ENCODE measurements at regions of chr6 and their contacts with region 1.

Region 1: DNA sequence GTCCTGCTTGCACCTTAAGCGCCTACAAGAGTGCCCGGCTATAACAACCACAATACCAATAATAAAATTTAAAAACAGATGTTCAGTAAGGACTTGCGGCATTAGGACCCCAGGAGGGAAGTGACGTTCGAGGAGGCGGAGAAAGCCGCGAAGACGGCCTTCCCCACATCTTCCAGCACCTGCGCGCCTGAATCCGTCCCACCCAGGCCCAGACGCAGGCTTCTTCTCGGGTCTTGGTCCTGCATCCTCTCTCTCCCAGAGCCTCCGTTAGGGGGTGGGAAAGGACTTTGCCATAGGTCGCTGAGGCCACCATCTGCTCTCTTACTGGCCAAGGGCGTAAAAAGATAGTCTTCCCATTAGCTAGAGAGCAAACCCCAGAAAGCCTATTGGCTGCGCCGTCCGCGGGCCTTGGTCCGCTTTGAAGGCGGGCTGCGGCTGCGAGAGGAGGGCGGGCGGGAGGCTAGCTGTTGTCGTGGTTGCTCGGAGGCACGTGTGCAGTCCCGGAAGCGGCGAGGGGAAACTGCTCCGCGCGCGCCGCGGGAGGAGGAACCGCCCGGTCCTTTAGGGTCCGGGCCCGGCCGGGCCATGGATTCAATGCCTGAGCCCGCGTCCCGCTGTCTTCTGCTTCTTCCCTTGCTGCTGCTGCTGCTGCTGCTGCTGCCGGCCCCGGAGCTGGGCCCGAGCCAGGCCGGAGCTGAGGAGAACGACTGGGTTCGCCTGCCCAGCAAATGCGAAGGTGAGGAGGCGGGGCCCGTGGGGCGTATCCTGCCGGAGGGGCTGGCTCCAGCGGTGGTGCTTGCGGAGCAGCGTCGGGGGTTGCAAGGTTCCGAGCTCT is at the start of gene CNPY3:
- DNase-seq: peak; percentile 80 to 96 (median 95)
- ATAC-seq: peak; percentile 90
- H3K4me3 ChIP-seq: peak within 1 kb of the TSS; percentile 80
- H3K4me3 Mint-ChIP-seq: peak within 1 kb of the TSS; percentile 86 to 99 (median 98)
- H3K27ac ChIP-seq: peak within 1 kb of the TSS; percentile 95
- H3K27ac Mint-ChIP-seq: peak within 1 kb of the TSS; percentile 96 to 100 (median 99)
- H3K4me1 ChIP-seq: peaks cover 33% of the 10 kb centered on the region in 2 donors
- H3K4me1 Mint-ChIP-seq: peaks cover 34 to 53% (median 43%) of the 10 kb centered on the region in 7 donors
- H3K27me3 ChIP-seq: no peaks in the 10 kb centered on the region
- H3K27me3 Mint-ChIP-seq: no peaks in the 10 kb centered on the region
- total RNA-seq, gene CNPY3: 58.6 to 98.9 (median 87.4) TPM

Region 2: GRCh38 chr6:42745707-42746462 is 183.3 kb before region 1 on chr6 and contains the start of gene TBCC:
- CTCF ChIA-PET with region 1: no interaction called
- POLR2A ChIA-PET with region 1: interaction called, 9 read pairs
- intact Hi-C with region 1: loop called (anchors 1 kb)
- DNase-seq: peak; percentile 73 to 97 (median 93)
- ATAC-seq: peak; percentile 88
- H3K4me3 ChIP-seq: peak within 1 kb of the TSS; percentile 95
- H3K4me3 Mint-ChIP-seq: peak within 1 kb of the TSS; percentile 91 to 100 (median 99)
- H3K27ac ChIP-seq: peak within 1 kb of the TSS; percentile 88
- H3K27ac Mint-ChIP-seq: peak within 1 kb of the TSS; percentile 97 to 100 (median 100)
- H3K4me1 ChIP-seq: peaks cover 19 to 29% of the 10 kb centered on the region in 2 donors
- H3K4me1 Mint-ChIP-seq: peaks cover 12 to 39% (median 27%) of the 10 kb centered on the region in 7 donors
- H3K27me3 ChIP-seq: no peaks in the 10 kb centered on the region
- H3K27me3 Mint-ChIP-seq: no peaks in the 10 kb centered on the region
- total RNA-seq, gene TBCC: 39.6 to 74.8 (median 71.4) TPM

Region 3: GRCh38 chr6:42911171-42912021 is 17.8 kb before region 1 on chr6:
- CTCF ChIA-PET with region 1: no interaction called
- POLR2A ChIA-PET with region 1: interaction called, 3 read pairs
- intact Hi-C with region 1: loop called in 1 of 2 experiments (anchors 1 kb)
- DNase-seq: no peak
- ATAC-seq: no peak
- H3K4me3 ChIP-seq: no peak overlapping the region
- H3K4me3 Mint-ChIP-seq: peak overlapping the region; percentile 17 to 82 (median 67)
- H3K27ac ChIP-seq: no peak overlapping the region
- H3K27ac Mint-ChIP-seq: peak overlapping the region in 2 of 9 donors; percentile 41 to 66
- H3K4me1 ChIP-seq: no peaks in the 10 kb centered on the region
- H3K4me1 Mint-ChIP-seq: peaks cover 0 to 6% (median 4%) of the 10 kb centered on the region in 7 donors
- H3K27me3 ChIP-seq: no peaks in the 10 kb centered on the region
- H3K27me3 Mint-ChIP-seq: peaks cover 5 to 22% (median 9%) of the 10 kb centered on the region in 5 donors

Region 4: GRCh38 chr6:42984001-42984923 is 55.1 kb after region 1 on chr6 and contains the start of gene PPP2R5D:
- CTCF ChIA-PET with region 1: interaction called, 4 read pairs
- POLR2A ChIA-PET with region 1: interaction called, 94 read pairs
- intact Hi-C with region 1: loop called (anchors 1 kb)
- DNase-seq: peak; percentile 81 to 98 (median 97)
- ATAC-seq: peak; percentile 97
- H3K4me3 ChIP-seq: peak within 1 kb of the TSS; percentile 64
- H3K4me3 Mint-ChIP-seq: peak within 1 kb of the TSS; percentile 87 to 99 (median 94)
- H3K27ac ChIP-seq: peak within 1 kb of the TSS; percentile 95
- H3K27ac Mint-ChIP-seq: peak within 1 kb of the TSS; percentile 89 to 99 (median 95)
- H3K4me1 ChIP-seq: peaks cover 28 to 40% of the 10 kb centered on the region in 2 donors
- H3K4me1 Mint-ChIP-seq: peaks cover 46 to 71% (median 68%) of the 10 kb centered on the region in 7 donors
- H3K27me3 ChIP-seq: no peaks in the 10 kb centered on the region
- H3K27me3 Mint-ChIP-seq: no peaks in the 10 kb centered on the region
- total RNA-seq, gene PPP2R5D: 19.7 to 60.4 (median 28.2) TPM

Region 5: GRCh38 chr6:43113431-43114260 is 184.4 kb after region 1 on chr6:
- CTCF ChIA-PET with region 1: no interaction called
- POLR2A ChIA-PET with region 1: no interaction called
- intact Hi-C with region 1: no loop called
- DNase-seq: no peak
- ATAC-seq: no peak
- H3K4me3 ChIP-seq: no peak overlapping the region
- H3K4me3 Mint-ChIP-seq: no peak overlapping the region
- H3K27ac ChIP-seq: no peak overlapping the region
- H3K27ac Mint-ChIP-seq: no peak overlapping the region
- H3K4me1 ChIP-seq: no peaks in the 10 kb centered on the region
- H3K4me1 Mint-ChIP-seq: peaks cover 0 to 2% (median 0%) of the 10 kb centered on the region in 7 donors
- H3K27me3 ChIP-seq: no peaks in the 10 kb centered on the region
- H3K27me3 Mint-ChIP-seq: no peaks in the 10 kb centered on the region

Region 6: DNA sequence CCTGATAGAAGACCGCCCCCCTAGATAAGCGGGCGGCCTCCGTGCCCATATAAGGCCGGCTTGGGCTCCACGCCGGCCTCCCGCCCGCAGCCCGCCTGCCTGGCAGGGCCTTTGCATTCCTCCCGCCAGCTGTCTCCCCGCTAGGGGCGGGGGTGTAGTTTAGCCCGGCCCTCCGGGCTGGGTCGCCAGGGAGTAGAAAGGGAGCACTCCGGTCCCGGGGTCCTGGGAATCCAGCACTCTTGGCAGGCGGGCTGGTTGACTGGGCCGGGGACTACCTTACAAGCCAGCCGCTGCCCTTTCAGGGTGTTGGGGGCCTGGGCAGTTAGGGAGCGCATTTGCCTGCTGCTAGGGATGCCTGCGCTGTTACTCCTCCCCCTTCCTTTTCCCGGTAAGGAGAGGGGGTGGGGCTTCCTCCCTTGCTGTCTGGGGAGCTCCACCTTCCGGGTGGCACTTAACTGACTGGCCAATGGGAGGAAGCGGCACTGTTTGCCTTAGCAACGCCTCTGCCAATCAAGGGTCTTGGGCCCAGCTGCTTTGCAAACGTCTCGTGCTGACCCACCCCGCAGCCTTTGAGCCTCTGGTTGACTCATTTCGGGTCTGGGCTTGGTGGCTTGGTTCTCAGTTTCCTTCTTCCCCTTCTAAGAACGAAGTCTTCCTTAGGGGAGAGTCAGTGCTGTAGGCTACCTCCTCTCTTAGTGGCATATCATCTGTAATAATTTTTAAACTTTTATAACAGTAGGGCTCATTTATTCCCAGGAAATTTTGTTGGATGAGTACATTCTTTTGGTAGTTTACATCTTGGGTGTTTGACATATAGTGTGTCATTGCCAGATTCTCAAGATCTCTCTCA is 245.3 kb after region 1 on chr6:
- CTCF ChIA-PET with region 1: no interaction called
- POLR2A ChIA-PET with region 1: interaction called, 8 read pairs
- intact Hi-C with region 1: loop called (anchors 1 kb)
- DNase-seq: peak; percentile 66 to 92 (median 88)
- ATAC-seq: peak; percentile 77
- H3K4me3 ChIP-seq: peak overlapping the region; percentile 72
- H3K4me3 Mint-ChIP-seq: peak overlapping the region; percentile 85 to 99 (median 96)
- H3K27ac ChIP-seq: peak overlapping the region; percentile 73
- H3K27ac Mint-ChIP-seq: peak overlapping the region; percentile 90 to 98 (median 94)
- H3K4me1 ChIP-seq: peaks cover 26 to 29% of the 10 kb centered on the region in 2 donors
- H3K4me1 Mint-ChIP-seq: peaks cover 35 to 49% (median 40%) of the 10 kb centered on the region in 7 donors
- H3K27me3 ChIP-seq: no peaks in the 10 kb centered on the region
- H3K27me3 Mint-ChIP-seq: peaks cover 0 to 2% (median 0%) of the 10 kb centered on the region in 5 donors

Region 7: GRCh38 chr6:43427406-43428111 is 498.4 kb after region 1 on chr6 and contains the start of gene ABCC10:
- CTCF ChIA-PET with region 1: no interaction called
- POLR2A ChIA-PET with region 1: interaction called, 3 read pairs
- intact Hi-C with region 1: loop called (anchors 1 to 5 kb)
- DNase-seq: peak; percentile 89 to 98 (median 95)
- ATAC-seq: peak; percentile 97
- H3K4me3 ChIP-seq: peak within 1 kb of the TSS; percentile 77
- H3K4me3 Mint-ChIP-seq: peak within 1 kb of the TSS; percentile 89 to 98 (median 94)
- H3K27ac ChIP-seq: peak within 1 kb of the TSS; percentile 95
- H3K27ac Mint-ChIP-seq: peak within 1 kb of the TSS; percentile 93 to 100 (median 98)
- H3K4me1 ChIP-seq: peaks cover 11 to 12% of the 10 kb centered on the region in 2 donors
- H3K4me1 Mint-ChIP-seq: peaks cover 15 to 36% (median 27%) of the 10 kb centered on the region in 7 donors
- H3K27me3 ChIP-seq: no peaks in the 10 kb centered on the region
- H3K27me3 Mint-ChIP-seq: peaks cover 0 to under 1% (median 0%) of the 10 kb centered on the region in 5 donors
- total RNA-seq, gene ABCC10: 56.2 to 74.6 (median 60.4) TPM

Region 8: GRCh38 chr6:44667668-44668390 is 1738.6 kb after region 1 on chr6:
- CTCF ChIA-PET with region 1: no interaction called
- POLR2A ChIA-PET with region 1: no interaction called
- intact Hi-C with region 1: no loop called
- DNase-seq: peak in 3 of 9 donors; percentile 13 to 21 (median 18)
- ATAC-seq: peak; percentile 45
- H3K4me3 ChIP-seq: no peak overlapping the region
- H3K4me3 Mint-ChIP-seq: no peak overlapping the region
- H3K27ac ChIP-seq: no peak overlapping the region
- H3K27ac Mint-ChIP-seq: peak overlapping the region in 1 of 9 donors; percentile 16
- H3K4me1 ChIP-seq: no peaks in the 10 kb centered on the region
- H3K4me1 Mint-ChIP-seq: peaks cover 0 to 1% (median 0%) of the 10 kb centered on the region in 7 donors
- H3K27me3 ChIP-seq: no peaks in the 10 kb centered on the region
- H3K27me3 Mint-ChIP-seq: no peaks in the 10 kb centered on the region